ENCODE measurements at regions of chr1 and their contacts with region 1.

Region 1: GRCh38 chr1:168082008-168082876 is 54.5 kb downstream of the GPR161 start:
- DNase-seq: peak; percentile 81
- CTCF ChIP-seq: peak; percentile 94

Region 2: GRCh38 chr1:168019407-168019806 is 62.8 kb before region 1 on chr1:
- CTCF ChIA-PET with region 1: interaction called, 15 read pairs
- POLR2A ChIA-PET with region 1: no interaction called
- DNase-seq: no peak
- CTCF ChIP-seq: no peak

Region 3: DNA sequence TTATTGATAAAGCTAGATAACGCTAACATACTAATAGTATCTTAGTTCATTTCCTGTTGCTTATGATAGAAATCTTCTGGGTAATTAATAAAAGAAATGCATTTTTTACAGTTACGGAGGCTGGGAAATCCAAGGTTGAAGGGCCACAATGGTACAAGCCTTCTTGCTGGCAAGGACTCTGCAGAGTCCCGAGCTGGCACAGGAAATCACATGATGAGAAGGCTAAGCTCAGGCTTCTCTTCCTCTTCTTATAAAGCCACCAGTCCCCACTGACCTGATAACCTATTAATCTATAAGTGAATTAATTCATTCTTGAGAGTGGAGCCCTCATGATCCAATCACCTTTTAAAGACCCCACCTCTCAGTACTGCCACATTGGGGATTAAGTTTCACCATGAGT is 28.1 kb before region 1 on chr1:
- CTCF ChIA-PET with region 1: interaction called, 25 read pairs
- POLR2A ChIA-PET with region 1: no interaction called
- DNase-seq: no peak
- CTCF ChIP-seq: no peak

Region 4: GRCh38 chr1:168092566-168093355 is 10.5 kb after region 1 on chr1:
- CTCF ChIA-PET with region 1: interaction called, 77 read pairs
- POLR2A ChIA-PET with region 1: no interaction called
- DNase-seq: no peak
- CTCF ChIP-seq: peak; percentile 24

Region 5: DNA sequence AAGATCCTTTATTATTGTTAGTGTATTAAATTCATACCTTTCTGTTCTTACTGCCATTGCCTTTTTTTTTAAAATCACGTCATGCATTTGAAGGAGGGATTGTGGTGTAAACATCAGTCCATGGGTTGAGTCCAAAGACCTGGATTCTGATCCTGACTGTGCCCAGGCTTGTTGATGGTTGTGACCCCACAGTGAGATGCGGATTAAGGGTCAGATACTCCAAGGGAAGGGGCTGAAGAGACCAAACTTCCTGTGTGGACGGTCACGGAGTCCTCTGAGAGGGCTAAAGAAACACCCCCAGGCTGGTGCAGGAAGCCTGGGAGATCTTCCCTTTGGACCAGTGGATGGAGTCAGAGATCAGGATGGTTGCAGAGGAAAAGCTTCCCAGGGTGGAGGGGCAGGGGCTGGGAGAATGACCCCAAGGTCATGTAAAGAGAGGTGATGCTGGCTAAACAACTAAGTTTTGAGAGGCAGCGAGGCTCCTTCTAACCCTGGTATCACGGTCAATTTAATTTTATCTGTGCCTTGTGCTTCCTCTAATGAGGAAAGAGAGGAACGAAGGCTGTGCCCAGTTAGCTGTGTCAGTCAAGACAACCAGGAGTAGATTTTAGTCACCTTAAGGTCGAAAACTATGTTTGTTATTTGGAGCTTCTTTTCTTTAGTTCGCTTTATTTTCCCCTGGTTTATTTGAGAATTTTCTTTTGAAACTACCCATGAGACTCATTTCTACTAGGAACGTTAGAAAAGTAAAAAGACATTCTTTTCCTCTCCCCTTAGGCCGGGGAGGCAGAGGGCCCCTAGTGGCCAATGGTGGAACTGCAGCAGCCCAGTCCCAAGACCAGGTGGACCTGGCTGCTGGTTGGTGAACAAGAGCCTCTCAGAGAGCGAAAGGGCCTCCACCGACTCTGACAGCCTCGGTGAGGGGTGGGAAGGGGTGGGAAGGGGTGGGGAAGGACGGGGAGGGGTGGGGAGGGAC is 63.2 kb after region 1 on chr1:
- CTCF ChIA-PET with region 1: interaction called, 12 read pairs
- POLR2A ChIA-PET with region 1: no interaction called
- DNase-seq: peak; percentile 91
- CTCF ChIP-seq: peak; percentile 99

Region 6: GRCh38 chr1:168321945-168322344 is 239.7 kb after region 1 on chr1:
- CTCF ChIA-PET with region 1: interaction called, 10 read pairs
- POLR2A ChIA-PET with region 1: no interaction called
- DNase-seq: no peak
- CTCF ChIP-seq: peak; percentile 50